ENCODE measurements at regions of chr7 and their contacts with region 1.

Region 1: GRCh38 chr7:100586266-100587025 is at the start of gene FBXO24:
- DNase-seq: peak; percentile 100
- H3K4me3 Mint-ChIP-seq: peak within 1 kb of the TSS; percentile 89
- H3K27ac Mint-ChIP-seq: peak within 1 kb of the TSS; percentile 97
- H3K4me1 Mint-ChIP-seq: peaks cover 27% of the 10 kb centered on the region
- H3K27me3 Mint-ChIP-seq: peaks cover 7% of the 10 kb centered on the region
- total RNA-seq, gene FBXO24: 1.5 to 2.6 TPM

Region 2: GRCh38 chr7:100469227-100470044 is 117.0 kb before region 1 on chr7:
- CTCF ChIA-PET with region 1: interaction called, 6 read pairs
- intact Hi-C with region 1: loop called (anchors 1 kb)
- DNase-seq: peak; percentile 88
- H3K4me3 Mint-ChIP-seq: no peak overlapping the region
- H3K27ac Mint-ChIP-seq: peak overlapping the region; percentile 13
- H3K4me1 Mint-ChIP-seq: peaks cover 29% of the 10 kb centered on the region
- H3K27me3 Mint-ChIP-seq: no peaks in the 10 kb centered on the region

Region 3: GRCh38 chr7:100545360-100546128 is 40.9 kb before region 1 on chr7:
- CTCF ChIA-PET with region 1: no interaction called
- intact Hi-C with region 1: loop called (anchors 1 kb)
- DNase-seq: peak; percentile 76
- H3K4me3 Mint-ChIP-seq: peak overlapping the region; percentile 59
- H3K27ac Mint-ChIP-seq: peak overlapping the region; percentile 95
- H3K4me1 Mint-ChIP-seq: peaks cover 94% of the 10 kb centered on the region
- H3K27me3 Mint-ChIP-seq: no peaks in the 10 kb centered on the region

Region 4: GRCh38 chr7:100570954-100571828 is 15.3 kb before region 1 on chr7:
- CTCF ChIA-PET with region 1: interaction called, 4 read pairs
- intact Hi-C with region 1: loop called (anchors 1 kb)
- DNase-seq: no peak
- H3K4me3 Mint-ChIP-seq: no peak overlapping the region
- H3K27ac Mint-ChIP-seq: no peak overlapping the region
- H3K4me1 Mint-ChIP-seq: peaks cover 22% of the 10 kb centered on the region
- H3K27me3 Mint-ChIP-seq: no peaks in the 10 kb centered on the region

Region 5: DNA sequence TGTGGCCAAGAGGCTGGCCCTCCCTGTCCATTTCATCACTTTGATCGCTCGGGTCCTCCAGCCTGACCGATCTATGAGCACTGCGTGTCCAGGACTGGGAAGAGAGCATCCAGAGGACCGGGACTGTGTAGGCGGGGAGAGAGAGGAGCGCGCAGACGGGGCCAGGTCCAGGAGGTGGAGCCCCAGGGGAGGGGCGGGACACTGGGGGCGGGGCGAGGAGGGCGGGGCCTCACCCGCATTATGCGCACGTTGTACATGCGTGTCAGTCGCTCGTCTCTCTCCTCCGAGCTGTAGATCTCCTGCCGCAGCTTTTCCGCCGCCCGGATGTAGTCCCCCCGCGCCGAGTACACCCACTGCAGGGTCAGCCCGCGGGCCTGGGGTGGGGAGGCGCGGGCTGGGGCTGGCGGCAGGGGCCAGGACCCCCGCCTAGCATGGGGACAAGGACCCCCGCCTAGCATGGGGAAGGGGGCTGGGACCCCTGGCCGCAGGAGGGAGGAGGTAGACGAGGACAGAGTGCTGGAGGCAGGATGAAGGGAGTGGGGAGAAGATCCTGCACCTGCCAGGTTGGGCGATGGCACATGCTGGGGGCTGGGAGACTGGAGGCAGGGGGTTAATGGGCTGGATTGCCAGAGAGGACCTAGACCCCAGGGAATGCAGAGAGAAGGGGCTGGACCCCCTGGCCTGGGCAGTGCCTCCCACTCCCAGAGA is 40.2 kb after region 1 on chr7:
- CTCF ChIA-PET with region 1: interaction called, 5 read pairs
- intact Hi-C with region 1: loop called (anchors 1 kb)
- DNase-seq: peak; percentile 91
- H3K4me3 Mint-ChIP-seq: peak overlapping the region; percentile 66
- H3K27ac Mint-ChIP-seq: peak overlapping the region; percentile 24
- H3K4me1 Mint-ChIP-seq: peaks cover 24% of the 10 kb centered on the region
- H3K27me3 Mint-ChIP-seq: no peaks in the 10 kb centered on the region

Region 6: DNA sequence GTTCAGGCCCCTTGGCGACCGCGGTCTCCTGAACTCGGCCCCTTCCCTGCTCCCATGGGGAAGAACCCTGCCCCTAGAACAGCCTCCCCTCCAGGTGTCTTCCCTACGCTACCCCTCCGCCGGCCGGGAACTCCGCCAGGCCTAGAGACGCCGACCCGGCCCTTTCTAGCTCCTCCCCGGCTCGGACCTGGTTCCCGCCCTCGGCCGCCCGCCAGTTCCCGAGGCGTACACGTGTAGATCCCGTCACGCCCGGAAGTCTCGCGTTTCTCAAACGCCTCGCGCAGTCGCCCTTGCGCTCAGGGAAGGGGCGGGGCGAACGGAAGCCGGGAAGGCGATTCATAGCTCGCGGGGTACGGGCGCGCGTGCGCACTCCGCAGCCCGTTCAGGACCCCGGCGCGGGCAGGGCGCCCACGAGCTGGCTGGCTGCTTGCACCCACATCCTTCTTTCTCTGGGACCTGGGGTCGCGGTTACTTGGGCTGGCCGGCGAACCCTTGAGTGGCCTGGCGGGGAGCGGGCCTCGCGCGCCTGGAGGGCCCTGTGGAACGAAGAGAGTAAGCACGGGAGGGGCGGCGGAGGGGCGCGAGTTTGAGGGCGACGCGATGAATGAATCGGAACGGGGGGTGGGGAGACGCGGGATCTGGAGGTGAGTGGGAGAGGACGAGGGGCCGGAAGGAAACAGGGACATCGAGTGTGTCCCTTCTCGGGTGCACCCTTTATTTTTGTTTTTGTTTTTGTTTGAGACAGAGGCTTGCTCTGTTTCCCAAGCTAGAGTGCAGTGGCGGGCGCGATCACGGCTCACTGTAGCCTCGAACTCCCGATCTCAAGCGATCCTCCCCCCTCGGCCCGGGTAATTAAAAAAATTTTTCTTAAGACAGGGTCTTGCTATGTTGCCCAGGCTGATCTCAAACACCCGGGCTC is 119.6 kb after region 1 on chr7 and contains the start of gene POP7:
- CTCF ChIA-PET with region 1: interaction called, 10 read pairs
- intact Hi-C with region 1: loop called (anchors 1 kb)
- DNase-seq: peak; percentile 99
- H3K4me3 Mint-ChIP-seq: peak within 1 kb of the TSS; percentile 96
- H3K27ac Mint-ChIP-seq: peak within 1 kb of the TSS; percentile 89
- H3K4me1 Mint-ChIP-seq: peaks cover 15% of the 10 kb centered on the region
- H3K27me3 Mint-ChIP-seq: peaks cover 4% of the 10 kb centered on the region
- total RNA-seq, gene POP7: 23.2 to 29.6 TPM

Measured in activated naive CD4-positive, alpha-beta T cell treated with anti-CD3 and anti-CD28 coated beads for 36 hours (primary cell).